ENCODE measurements at regions of chr3 and their contacts with region 1.

Region 1: GRCh38 chr3:157532529-157533297 is 29.5 kb upstream of the VEPH1 start:
- DNase-seq: peak; percentile 83

Region 2: GRCh38 chr3:157618075-157618760 is 85.5 kb after region 1 on chr3:
- in situ Hi-C with region 1: loop called (anchors 5 kb)
- DNase-seq: peak; percentile 73

Measured in G401 (cell line).